Right lobe of liver (tissue), 6 donors: ENCODE measurements at regions of chr2 and their contacts with region 1.

Region 1: GRCh38 chr2:26968001-26968400 is 2.4 kb upstream of the MAPRE3 start:
- DNase-seq: no peak
- ATAC-seq: no peak
- H3K4me3 ChIP-seq: no peak overlapping the region
- H3K27ac ChIP-seq: no peak overlapping the region
- H3K4me1 ChIP-seq: peaks cover 0 to 14% (median 5%) of the 10 kb centered on the region in 4 donors
- H3K27me3 ChIP-seq: no peaks in the 10 kb centered on the region
- CTCF ChIP-seq: no peak
- POLR2A ChIP-seq: no peak

Region 2: GRCh38 chr2:26672112-26672817 is 295.7 kb before region 1 on chr2:
- intact Hi-C with region 1: no loop called
- DNase-seq: peak in 1 of 3 donors; percentile 22
- ATAC-seq: no peak
- H3K4me3 ChIP-seq: no peak overlapping the region
- H3K27ac ChIP-seq: no peak overlapping the region
- H3K4me1 ChIP-seq: no peaks in the 10 kb centered on the region
- H3K27me3 ChIP-seq: no peaks in the 10 kb centered on the region
- CTCF ChIP-seq: no peak
- POLR2A ChIP-seq: no peak

Region 3: GRCh38 chr2:27016801-27017325 is 48.9 kb after region 1 on chr2:
- intact Hi-C with region 1: loop called (anchors 5 kb)
- DNase-seq: peak in 2 of 3 donors; percentile 57 to 76
- ATAC-seq: peak; percentile 52 to 63 (median 57)
- H3K4me3 ChIP-seq: no peak overlapping the region
- H3K27ac ChIP-seq: peak overlapping the region; percentile 25 to 78 (median 68)
- H3K4me1 ChIP-seq: peaks cover 2 to 69% (median 40%) of the 10 kb centered on the region in 4 donors
- H3K27me3 ChIP-seq: no peaks in the 10 kb centered on the region
- CTCF ChIP-seq: peak; percentile 66 to 83 (median 73)
- POLR2A ChIP-seq: no peak

Region 4: GRCh38 chr2:27071277-27071989 is 103.4 kb after region 1 on chr2 and contains the start of gene OST4:
- intact Hi-C with region 1: loop called in 1 of 2 experiments (anchors 10 kb)
- DNase-seq: peak; percentile 96 to 97 (median 96)
- ATAC-seq: peak; percentile 93 to 98 (median 96)
- H3K4me3 ChIP-seq: peak within 1 kb of the TSS; percentile 85 to 94 (median 91)
- H3K27ac ChIP-seq: peak within 1 kb of the TSS; percentile 75 to 89 (median 80)
- H3K4me1 ChIP-seq: peaks cover 0 to 10% (median 4%) of the 10 kb centered on the region in 4 donors
- H3K27me3 ChIP-seq: no peaks in the 10 kb centered on the region
- CTCF ChIP-seq: peak in 2 of 4 donors; percentile 11 to 34
- POLR2A ChIP-seq: peak; percentile 78
- total RNA-seq, gene OST4: 144 to 182 (median 161) TPM

Region 5: DNA sequence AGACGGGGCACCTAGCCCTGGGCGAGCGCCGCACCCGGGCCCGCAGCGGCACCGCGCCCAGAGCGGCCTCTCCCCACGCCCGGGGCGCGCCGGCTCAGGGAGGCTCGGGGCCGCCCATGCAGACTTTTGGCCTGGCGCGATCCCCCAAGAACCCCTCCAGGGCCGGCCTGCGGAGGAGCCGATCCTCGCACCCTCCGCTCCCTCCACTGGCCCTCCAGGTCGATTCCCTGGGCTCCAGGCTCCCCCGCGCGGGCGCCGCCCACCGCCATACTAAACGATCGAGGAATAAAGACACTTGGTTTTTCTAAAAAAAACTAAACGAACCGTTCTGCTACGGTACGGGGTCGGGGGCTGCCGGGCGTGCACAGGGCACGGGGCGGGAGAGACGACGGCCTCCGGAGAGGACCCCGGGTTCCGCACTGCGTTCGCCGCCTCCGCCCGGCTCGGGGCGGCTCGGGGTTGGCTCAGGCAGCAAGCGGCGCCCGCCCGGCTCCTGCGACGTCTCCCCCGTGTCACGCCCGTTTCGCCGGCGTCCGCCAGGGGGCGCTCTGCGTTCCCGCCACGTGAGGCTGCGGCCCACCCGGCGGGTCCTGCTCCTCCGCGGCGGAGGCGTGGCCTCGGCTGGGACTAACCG is 118.2 kb after region 1 on chr2:
- intact Hi-C with region 1: loop called in 1 of 2 experiments (anchors 10 kb)
- DNase-seq: peak; percentile 96 to 97 (median 97)
- ATAC-seq: peak; percentile 67 to 86 (median 78)
- H3K4me3 ChIP-seq: peak overlapping the region; percentile 52 to 77 (median 64)
- H3K27ac ChIP-seq: peak overlapping the region; percentile 59 to 80 (median 75)
- H3K4me1 ChIP-seq: peaks cover 0 to 30% (median 7%) of the 10 kb centered on the region in 4 donors
- H3K27me3 ChIP-seq: no peaks in the 10 kb centered on the region
- CTCF ChIP-seq: peak; percentile 87 to 98 (median 93)
- POLR2A ChIP-seq: peak; percentile 58